Naive thymus-derived CD4-positive, alpha-beta T cell (primary cell): ENCODE measurements at regions of chr20 and their contacts with region 1.

Region 1: GRCh38 chr20:43749734-43750294 is 23.0 kb upstream of the GTSF1L start:
- DNase-seq: peak; percentile 50 to 94 (median 72)
- ATAC-seq: peak; percentile 85
- H3K4me3 ChIP-seq: no peak overlapping the region
- H3K4me3 Mint-ChIP-seq: peak overlapping the region in 6 of 10 donors; percentile 29 to 54 (median 46)
- H3K27ac ChIP-seq: no peak overlapping the region
- H3K27ac Mint-ChIP-seq: peak overlapping the region in 6 of 9 donors; percentile 28 to 81 (median 51)
- H3K4me1 ChIP-seq: peaks cover 15 to 18% of the 10 kb centered on the region in 2 donors
- H3K4me1 Mint-ChIP-seq: peaks cover 22 to 44% (median 38%) of the 10 kb centered on the region in 7 donors
- H3K27me3 ChIP-seq: no peaks in the 10 kb centered on the region
- H3K27me3 Mint-ChIP-seq: peaks cover 0 to 18% (median 0%) of the 10 kb centered on the region in 5 donors

Region 2: DNA sequence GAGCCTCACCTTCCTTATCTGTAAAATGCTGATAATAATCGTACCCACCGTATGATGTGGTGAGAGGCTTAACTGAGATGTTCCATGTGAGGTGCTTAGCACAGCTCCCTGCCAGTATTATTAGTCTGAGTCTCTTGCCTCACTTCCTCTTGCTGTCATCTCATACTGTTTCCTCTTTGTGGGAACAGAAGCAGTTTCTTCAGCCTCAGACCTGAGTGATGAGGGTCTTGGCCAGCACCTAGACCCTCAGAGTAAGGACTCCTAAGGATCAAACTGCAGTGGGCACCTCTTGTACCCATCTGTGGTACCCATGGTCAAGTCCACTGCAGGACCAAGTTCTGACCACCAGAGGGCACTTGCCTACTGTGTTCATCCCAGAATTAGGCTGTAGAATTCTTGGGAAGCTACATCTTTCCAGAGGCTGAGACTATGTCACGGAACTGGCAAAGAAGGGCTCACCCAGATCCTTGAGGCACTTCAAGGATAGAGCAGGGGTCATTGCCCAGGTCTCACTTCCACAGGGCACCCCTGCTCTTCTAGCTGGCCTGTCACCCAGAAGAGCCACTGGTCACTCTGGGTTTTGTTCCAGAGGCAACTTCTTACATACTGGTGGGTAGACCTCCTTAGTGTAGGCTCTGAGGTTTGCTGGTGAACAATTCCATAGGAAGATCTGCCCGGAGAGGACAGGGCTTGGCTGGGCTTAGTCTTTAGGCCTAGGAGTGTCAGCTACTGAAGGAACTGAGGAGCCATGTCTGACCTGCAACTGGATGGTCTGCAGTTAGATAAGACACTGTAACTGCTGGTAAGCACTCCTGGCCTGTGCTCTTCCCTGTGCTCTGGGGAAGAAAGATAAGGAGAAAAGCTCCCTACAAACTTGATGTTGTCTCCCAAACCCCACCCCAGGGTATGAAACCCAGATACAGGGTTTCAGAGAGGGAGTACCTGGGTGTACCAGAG is 211.6 kb before region 1 on chr20:
- CTCF ChIA-PET with region 1: no interaction called
- POLR2A ChIA-PET with region 1: no interaction called
- intact Hi-C with region 1: loop called in 1 of 2 experiments (anchors 2 kb)
- DNase-seq: peak in 5 of 9 donors; percentile 19 to 45 (median 31)
- ATAC-seq: peak; percentile 57
- H3K4me3 ChIP-seq: no peak overlapping the region
- H3K4me3 Mint-ChIP-seq: no peak overlapping the region
- H3K27ac ChIP-seq: no peak overlapping the region
- H3K27ac Mint-ChIP-seq: peak overlapping the region in 2 of 9 donors; percentile 45 to 57
- H3K4me1 ChIP-seq: no peaks in the 10 kb centered on the region
- H3K4me1 Mint-ChIP-seq: peaks cover 0 to 4% (median 0%) of the 10 kb centered on the region in 7 donors
- H3K27me3 ChIP-seq: no peaks in the 10 kb centered on the region
- H3K27me3 Mint-ChIP-seq: no peaks in the 10 kb centered on the region

Region 3: DNA sequence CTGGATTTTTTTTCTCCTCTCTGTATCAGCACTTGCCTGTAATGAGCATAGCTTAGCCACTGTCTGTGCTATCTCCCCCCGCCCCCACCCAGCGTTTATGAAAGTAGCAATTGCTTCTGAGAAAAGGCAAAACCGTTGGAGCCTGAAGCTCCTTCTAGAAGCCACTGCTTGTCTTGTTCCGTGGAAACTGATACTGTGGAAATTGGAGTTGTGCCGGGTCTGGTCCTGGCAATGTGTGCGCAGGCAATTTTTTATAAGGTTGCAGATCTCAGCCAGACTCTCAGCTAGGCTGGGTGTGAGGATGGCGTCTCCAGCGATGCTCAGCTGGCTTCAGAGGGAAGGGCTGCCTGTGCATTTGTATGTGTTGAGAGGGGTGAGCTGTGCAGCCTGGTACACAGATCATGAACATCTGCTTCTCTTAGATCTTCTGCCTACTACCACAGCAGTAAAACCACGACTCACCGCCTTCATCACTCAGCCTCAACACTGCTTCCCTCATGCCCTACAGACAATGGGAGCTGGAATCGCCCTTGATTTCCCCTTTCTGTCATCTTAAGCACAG is 49.4 kb after region 1 on chr20:
- CTCF ChIA-PET with region 1: no interaction called
- POLR2A ChIA-PET with region 1: no interaction called
- intact Hi-C with region 1: loop called in 1 of 2 experiments (anchors 5 kb)
- DNase-seq: no peak
- ATAC-seq: no peak
- H3K4me3 ChIP-seq: no peak overlapping the region
- H3K4me3 Mint-ChIP-seq: peak overlapping the region in 2 of 10 donors; percentile 6 to 54
- H3K27ac ChIP-seq: no peak overlapping the region
- H3K27ac Mint-ChIP-seq: peak overlapping the region in 3 of 9 donors; percentile 19 to 65 (median 48)
- H3K4me1 ChIP-seq: no peaks in the 10 kb centered on the region
- H3K4me1 Mint-ChIP-seq: peaks cover 4 to 23% (median 19%) of the 10 kb centered on the region in 7 donors
- H3K27me3 ChIP-seq: no peaks in the 10 kb centered on the region
- H3K27me3 Mint-ChIP-seq: peaks cover 0 to 12% (median 0%) of the 10 kb centered on the region in 5 donors

Region 4: DNA sequence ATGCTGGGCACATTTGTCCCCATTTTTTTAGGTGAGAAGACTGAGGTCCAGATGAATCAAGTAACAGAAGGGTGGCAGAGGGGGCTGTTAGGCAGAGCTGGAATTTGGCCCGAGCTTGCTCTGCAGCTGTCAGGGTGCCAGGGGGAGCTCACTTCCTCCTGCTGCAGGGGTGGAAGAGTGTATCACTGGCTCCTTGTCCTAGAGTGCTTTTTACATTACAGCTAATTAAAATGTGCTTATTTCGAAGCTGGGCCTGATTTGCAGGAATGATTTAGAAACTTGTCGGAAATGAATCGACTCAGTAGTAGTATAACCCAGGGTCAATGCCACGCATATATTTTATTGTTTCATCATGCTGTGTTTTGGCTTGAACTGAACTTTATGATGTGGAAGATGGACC is 176.0 kb after region 1 on chr20:
- CTCF ChIA-PET with region 1: no interaction called
- POLR2A ChIA-PET with region 1: no interaction called
- intact Hi-C with region 1: loop called in 1 of 2 experiments (anchors 10 kb)
- DNase-seq: peak in 6 of 9 donors; percentile 32 to 52 (median 40)
- ATAC-seq: peak; percentile 69
- H3K4me3 ChIP-seq: no peak overlapping the region
- H3K4me3 Mint-ChIP-seq: peak overlapping the region; percentile 38 to 82 (median 73)
- H3K27ac ChIP-seq: no peak overlapping the region
- H3K27ac Mint-ChIP-seq: peak overlapping the region in 7 of 9 donors; percentile 48 to 87 (median 71)
- H3K4me1 ChIP-seq: peaks cover 20 to 39% of the 10 kb centered on the region in 2 donors
- H3K4me1 Mint-ChIP-seq: peaks cover 35 to 84% (median 68%) of the 10 kb centered on the region in 7 donors
- H3K27me3 ChIP-seq: no peaks in the 10 kb centered on the region
- H3K27me3 Mint-ChIP-seq: peaks cover 0 to 62% (median 9%) of the 10 kb centered on the region in 5 donors

Region 5: DNA sequence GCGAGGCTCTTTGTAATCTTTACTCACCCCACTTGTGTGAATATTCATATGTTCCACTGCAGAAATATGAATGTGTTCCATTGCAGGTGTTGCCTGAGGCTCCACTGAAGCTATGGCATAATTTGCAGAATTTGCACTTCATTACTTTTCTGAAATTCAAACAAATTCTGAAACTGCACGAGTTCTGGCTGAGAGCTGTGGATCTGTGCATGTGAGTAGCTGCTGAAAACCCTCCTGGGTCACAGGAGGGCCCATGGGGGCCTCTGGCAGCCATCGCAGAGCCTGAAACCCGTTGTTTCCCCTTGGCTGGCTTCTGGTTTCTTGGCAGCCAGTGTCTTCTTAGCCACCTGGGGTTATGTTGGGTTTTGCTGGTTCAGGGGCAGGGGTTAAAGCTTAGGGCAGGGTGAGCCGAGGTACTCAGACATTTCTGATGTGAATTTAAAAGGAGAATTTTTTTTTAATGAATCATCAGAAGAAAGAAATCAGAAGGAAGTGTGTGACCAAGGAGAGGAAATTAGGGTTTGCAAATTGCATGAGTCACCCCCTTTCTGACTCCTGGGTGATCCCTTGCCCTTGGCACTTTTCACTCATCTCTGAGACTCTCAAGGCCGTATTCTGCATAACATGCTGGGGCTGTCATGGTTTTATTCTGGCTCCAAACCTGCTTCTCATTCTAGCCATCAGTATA is 205.4 kb after region 1 on chr20:
- CTCF ChIA-PET with region 1: no interaction called
- POLR2A ChIA-PET with region 1: no interaction called
- intact Hi-C with region 1: loop called in 1 of 2 experiments (anchors 1 kb)
- DNase-seq: peak in 3 of 9 donors; percentile 13 to 49 (median 13)
- ATAC-seq: peak; percentile 72
- H3K4me3 ChIP-seq: no peak overlapping the region
- H3K4me3 Mint-ChIP-seq: peak overlapping the region in 7 of 10 donors; percentile 8 to 65 (median 22)
- H3K27ac ChIP-seq: no peak overlapping the region
- H3K27ac Mint-ChIP-seq: peak overlapping the region in 2 of 9 donors; percentile 28 to 58
- H3K4me1 ChIP-seq: peaks cover 72 to 76% of the 10 kb centered on the region in 2 donors
- H3K4me1 Mint-ChIP-seq: peaks cover 72 to 96% (median 85%) of the 10 kb centered on the region in 7 donors
- H3K27me3 ChIP-seq: peaks cover 0 to 5% of the 10 kb centered on the region in 2 donors
- H3K27me3 Mint-ChIP-seq: peaks cover 0 to 45% (median 0%) of the 10 kb centered on the region in 5 donors

Region 6: GRCh38 chr20:44069203-44070011 is 319.6 kb after region 1 on chr20:
- CTCF ChIA-PET with region 1: interaction called, 6 read pairs
- POLR2A ChIA-PET with region 1: no interaction called
- intact Hi-C with region 1: loop called in 1 of 2 experiments (anchors 1 kb)
- DNase-seq: peak; percentile 47 to 97 (median 90)
- ATAC-seq: peak; percentile 65
- H3K4me3 ChIP-seq: peak overlapping the region; percentile 60
- H3K4me3 Mint-ChIP-seq: peak overlapping the region; percentile 70 to 93 (median 86)
- H3K27ac ChIP-seq: peak overlapping the region; percentile 97
- H3K27ac Mint-ChIP-seq: peak overlapping the region; percentile 94 to 100 (median 99)
- H3K4me1 ChIP-seq: peaks cover 31 to 77% of the 10 kb centered on the region in 2 donors
- H3K4me1 Mint-ChIP-seq: peaks cover 40 to 96% (median 81%) of the 10 kb centered on the region in 7 donors
- H3K27me3 ChIP-seq: no peaks in the 10 kb centered on the region
- H3K27me3 Mint-ChIP-seq: peaks cover 0 to 16% (median 0%) of the 10 kb centered on the region in 5 donors